ENCODE measurements at regions of chr17 and their contacts with region 1.

Region 1: DNA sequence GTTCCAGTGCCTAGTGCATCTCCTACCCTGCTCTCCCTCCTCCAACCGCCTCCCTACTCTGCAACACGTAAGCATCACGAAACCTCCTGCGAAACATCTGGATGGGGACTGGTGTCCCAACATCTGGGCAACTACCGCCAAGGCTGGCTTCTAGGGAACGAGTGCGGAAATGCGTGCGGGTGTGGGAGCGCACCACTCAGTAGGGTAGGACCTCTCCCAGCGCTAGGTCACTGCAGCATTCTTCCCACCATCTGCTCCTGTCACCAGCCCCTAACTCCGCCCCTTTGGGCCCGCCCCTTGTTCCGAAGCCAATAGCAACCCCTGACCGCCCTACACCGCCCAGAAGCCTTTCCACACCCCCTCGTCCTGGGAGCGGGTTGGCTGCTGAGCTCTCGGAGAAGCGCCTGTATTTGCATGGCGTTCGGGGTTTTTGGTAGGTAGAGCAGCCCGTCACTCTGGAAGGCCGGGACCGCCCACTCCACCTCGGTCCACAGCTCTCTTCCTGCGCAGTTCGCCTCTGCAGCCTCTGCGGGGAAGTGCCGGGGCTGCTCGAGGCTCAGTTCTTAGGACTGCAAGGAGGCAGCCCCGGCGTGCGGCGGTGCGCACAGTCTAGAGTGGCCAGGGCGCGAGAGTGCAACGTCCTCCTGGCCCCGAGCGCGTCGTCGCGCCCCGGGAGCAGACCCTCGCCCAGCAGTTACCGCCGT is at the start of gene HS3ST3B1:
- DNase-seq: peak; percentile 95 to 96
- H3K4me3 ChIP-seq: peak within 1 kb of the TSS; percentile 42 to 56
- H3K27ac ChIP-seq: no peak within 1 kb of the TSS
- H3K4me1 ChIP-seq: peaks cover 0 to 60% (median 46%) of the 10 kb centered on the region in 4 donors
- H3K27me3 ChIP-seq: peaks cover 8 to 96% of the 10 kb centered on the region in 2 donors
- CTCF ChIP-seq: no peak

Region 2: DNA sequence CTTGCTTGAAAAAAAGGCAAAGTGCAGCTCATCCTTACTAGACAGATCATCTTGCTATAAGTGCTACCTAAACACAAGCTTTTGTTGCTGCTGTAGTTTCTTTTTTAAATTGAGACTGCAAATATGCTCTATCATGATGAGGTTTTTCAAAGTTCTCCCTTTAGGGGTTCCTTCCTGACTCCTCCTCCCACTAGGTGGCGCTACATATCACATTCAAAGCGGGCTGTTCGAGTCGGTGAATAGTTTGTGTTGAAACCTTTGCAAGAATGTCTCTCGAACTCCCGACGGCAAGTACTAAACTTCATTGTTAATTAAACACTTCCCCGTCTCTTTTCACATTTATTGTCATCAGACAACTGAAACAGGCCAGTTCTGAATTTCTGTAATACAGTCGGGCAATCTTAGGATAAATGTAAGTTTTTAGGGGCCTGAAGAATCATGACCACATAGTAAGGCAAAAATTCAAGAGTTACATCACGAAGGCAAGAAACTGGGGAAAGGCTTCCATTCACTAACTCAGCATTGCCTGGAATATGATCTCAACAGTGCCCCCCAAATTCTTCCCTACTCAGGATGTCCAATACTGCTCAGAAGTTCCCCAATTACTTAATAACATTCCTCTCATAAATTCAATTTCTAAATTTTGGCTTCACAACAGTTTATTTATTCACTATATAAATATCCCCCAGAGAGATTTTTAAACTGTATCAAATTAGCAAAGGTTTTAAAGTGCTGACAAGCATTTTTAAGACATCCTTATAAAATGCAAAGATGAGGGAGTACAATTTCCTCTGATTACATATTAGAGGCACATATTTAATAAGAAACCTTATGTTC is 705.7 kb before region 1 on chr17:
- intact Hi-C with region 1: loop called (anchors 5 kb)
- DNase-seq: peak; percentile 69 to 75
- H3K4me3 ChIP-seq: no peak overlapping the region
- H3K27ac ChIP-seq: no peak overlapping the region
- H3K4me1 ChIP-seq: peaks cover 0 to 4% (median 0%) of the 10 kb centered on the region in 4 donors
- H3K27me3 ChIP-seq: peaks cover 0 to 36% of the 10 kb centered on the region in 2 donors
- CTCF ChIP-seq: peak; percentile 63 to 73

Region 3: GRCh38 chr17:14228903-14229302 is 71.8 kb before region 1 on chr17:
- intact Hi-C with region 1: no loop called
- DNase-seq: no peak
- H3K4me3 ChIP-seq: no peak overlapping the region
- H3K27ac ChIP-seq: no peak overlapping the region
- H3K4me1 ChIP-seq: no peaks in the 10 kb centered on the region
- H3K27me3 ChIP-seq: no peaks in the 10 kb centered on the region
- CTCF ChIP-seq: no peak